ENCODE measurements at regions of chr10 and their contacts with region 1.

Region 1: GRCh38 chr10:97731346-97732051 is 5.4 kb upstream of the ZFYVE27 start:
- DNase-seq: peak; percentile 85
- H3K4me3 ChIP-seq: no peak overlapping the region
- H3K27ac ChIP-seq: no peak overlapping the region
- H3K4me1 ChIP-seq: peaks cover 0 to 20% (median 10%) of the 10 kb centered on the region in 4 donors
- H3K27me3 ChIP-seq: no peaks in the 10 kb centered on the region
- CTCF ChIP-seq: peak; percentile 63 to 91 (median 82)
- EP300 ChIP-seq: no peak
- POLR2A ChIP-seq: no peak

Region 2: DNA sequence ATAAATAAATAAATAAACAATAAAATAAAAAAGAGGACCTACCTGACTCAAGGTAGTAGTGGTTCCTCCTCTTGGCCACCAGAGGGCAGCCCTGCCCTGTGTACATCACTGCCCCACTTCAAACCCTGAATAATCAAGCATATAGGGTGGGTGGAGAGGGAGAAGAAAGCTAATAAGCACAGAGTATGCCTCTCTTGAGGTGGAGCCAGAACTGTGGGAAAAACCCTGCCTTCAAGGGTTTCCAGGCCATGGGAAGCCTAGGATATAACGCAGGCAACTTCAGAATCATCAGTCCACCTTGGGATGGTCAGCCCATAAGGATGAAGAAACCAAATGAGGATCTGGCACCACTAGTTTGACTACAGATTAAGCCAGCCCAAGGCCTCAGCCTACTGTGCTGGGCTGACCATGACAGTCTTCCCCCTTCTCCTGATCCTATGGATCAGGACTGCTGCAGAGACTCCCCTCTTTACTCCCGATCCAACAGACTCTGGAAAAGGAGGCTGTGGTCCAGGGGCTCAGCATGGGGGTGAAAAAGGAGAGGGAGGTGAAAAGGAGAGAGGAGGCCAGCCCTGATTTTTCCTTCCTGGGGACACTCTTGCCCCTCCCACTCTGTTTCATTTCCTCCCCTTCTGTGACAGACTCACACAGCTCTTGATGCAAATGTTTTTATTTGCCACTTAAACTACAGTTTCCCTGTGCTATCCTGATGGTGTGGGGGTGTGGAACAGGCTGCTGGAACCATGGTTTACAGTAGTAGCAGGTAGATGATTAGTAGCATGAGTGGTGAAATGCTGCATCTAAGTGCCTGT is 54.5 kb before region 1 on chr10:
- intact Hi-C with region 1: loop called (anchors 1 kb)
- DNase-seq: no peak
- H3K4me3 ChIP-seq: no peak overlapping the region
- H3K27ac ChIP-seq: peak overlapping the region in 2 of 4 donors; percentile 35
- H3K4me1 ChIP-seq: peaks cover 0 to 2% (median under 1%) of the 10 kb centered on the region in 4 donors
- H3K27me3 ChIP-seq: no peaks in the 10 kb centered on the region
- CTCF ChIP-seq: peak; percentile 85 to 90 (median 88)
- EP300 ChIP-seq: no peak
- POLR2A ChIP-seq: no peak

Region 3: GRCh38 chr10:97701438-97702069 is 29.9 kb before region 1 on chr10:
- intact Hi-C with region 1: loop called (anchors 1 kb)
- DNase-seq: no peak
- H3K4me3 ChIP-seq: no peak overlapping the region
- H3K27ac ChIP-seq: no peak overlapping the region
- H3K4me1 ChIP-seq: no peaks in the 10 kb centered on the region
- H3K27me3 ChIP-seq: no peaks in the 10 kb centered on the region
- CTCF ChIP-seq: peak; percentile 71 to 89 (median 80)
- EP300 ChIP-seq: no peak
- POLR2A ChIP-seq: no peak

Region 4: DNA sequence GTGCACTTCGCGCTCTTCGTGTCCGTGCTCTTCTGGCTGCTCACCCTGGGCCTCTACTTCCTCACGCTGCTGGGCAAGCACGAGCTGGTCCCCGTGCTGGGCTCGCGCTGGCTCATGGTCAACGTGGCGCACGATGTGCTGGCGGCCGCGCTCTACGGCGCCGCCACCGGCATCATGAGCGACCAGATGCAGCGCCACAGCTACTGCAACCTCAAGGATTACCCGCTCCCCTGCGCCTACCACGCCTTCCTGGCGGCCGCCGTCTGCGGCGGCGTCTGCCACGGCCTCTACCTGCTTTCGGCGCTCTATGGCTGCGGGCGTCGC is 17.5 kb before region 1 on chr10:
- intact Hi-C with region 1: loop called (anchors 1 kb)
- DNase-seq: peak; percentile 88
- H3K4me3 ChIP-seq: peak overlapping the region; percentile 65 to 80 (median 73)
- H3K27ac ChIP-seq: peak overlapping the region; percentile 95 to 100 (median 98)
- H3K4me1 ChIP-seq: peaks cover 2 to 80% (median 67%) of the 10 kb centered on the region in 4 donors
- H3K27me3 ChIP-seq: no peaks in the 10 kb centered on the region
- CTCF ChIP-seq: no peak
- EP300 ChIP-seq: no peak
- POLR2A ChIP-seq: no peak

Measured in sigmoid colon (tissue), 7 donors.